GM12878 (cell line): ENCODE measurements at regions of chr18 and their contacts with region 1.

Region 1: DNA sequence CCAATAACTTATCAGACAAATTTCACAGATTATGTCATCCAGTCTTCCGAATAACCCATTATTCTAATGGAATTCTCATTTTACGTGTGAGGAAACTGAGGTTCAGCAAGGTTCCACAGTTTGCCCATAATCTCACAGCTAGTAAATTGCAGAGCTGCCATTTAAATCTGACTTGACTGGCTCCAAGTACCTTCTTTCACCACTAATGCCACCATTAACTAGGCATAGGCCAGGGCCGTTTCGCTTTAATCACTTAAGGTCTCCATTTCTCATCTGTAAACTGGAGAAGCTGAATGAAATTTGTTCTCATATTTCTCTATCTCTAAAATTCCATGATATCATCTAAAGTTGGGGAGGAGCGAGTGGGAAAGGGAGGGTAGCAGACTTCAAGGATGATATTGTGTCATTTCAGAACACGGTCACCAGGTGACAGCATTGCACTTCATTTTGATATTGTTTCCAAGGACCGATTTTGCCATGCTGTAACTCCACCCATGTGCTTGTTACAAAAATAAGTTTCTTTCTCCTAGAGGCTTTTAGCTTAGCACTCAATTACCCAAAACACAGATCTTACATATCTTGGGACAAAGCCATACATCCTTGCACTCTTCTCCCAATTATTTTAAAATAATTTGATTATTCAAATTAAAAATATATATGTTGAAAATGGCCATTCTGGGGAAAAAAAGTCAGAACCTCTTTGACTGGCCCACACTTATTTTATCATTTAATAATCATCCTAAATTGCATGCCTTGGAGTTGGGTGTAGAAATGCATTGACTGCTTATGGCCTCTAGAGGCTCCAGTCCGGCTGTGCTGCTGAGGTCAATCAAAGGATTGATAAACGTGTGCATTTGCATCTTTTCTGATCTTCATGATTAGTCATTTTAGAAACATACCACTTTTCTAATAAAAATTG is 123.8 kb downstream of the AKAIN1 start:
- DNase-seq: no peak
- ATAC-seq: peak; percentile 88
- H3K4me3 ChIP-seq: no peak overlapping the region
- H3K27ac ChIP-seq: no peak overlapping the region
- H3K4me1 ChIP-seq: no peaks in the 10 kb centered on the region
- H3K27me3 ChIP-seq: no peaks in the 10 kb centered on the region
- CTCF ChIP-seq: peak; percentile 52 to 90 (median 65)
- EP300 ChIP-seq: no peak
- POLR2A ChIP-seq: no peak
- RAD21 ChIP-seq: peak; percentile 81

Region 2: DNA sequence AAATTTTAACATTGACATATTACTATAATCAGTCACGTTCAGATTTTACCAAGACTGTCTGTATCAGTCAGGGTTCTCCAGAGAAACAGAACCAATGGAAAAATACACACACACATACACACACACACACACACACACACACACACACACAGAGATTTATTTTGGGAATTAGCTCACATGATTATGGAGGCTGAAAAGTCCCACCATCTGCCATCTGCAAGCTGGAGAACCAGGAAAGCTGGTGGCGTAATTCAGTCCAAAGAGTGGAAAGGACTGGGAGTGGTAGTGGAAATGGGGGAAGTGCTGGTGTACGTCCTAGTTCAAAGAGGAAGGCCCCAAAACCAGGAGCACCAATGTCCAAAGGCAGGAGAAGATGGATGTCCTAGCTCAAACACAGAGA is 42.6 kb before region 1 on chr18:
- CTCF ChIA-PET with region 1: no interaction called
- POLR2A ChIA-PET with region 1: no interaction called
- RAD21 ChIA-PET with region 1: no interaction called
- SMC1A ChIA-PET with region 1: no interaction called
- in situ Hi-C with region 1: no loop called
- intact Hi-C with region 1: no loop called
- DNase-seq: no peak
- ATAC-seq: no peak
- H3K4me3 ChIP-seq: no peak overlapping the region
- H3K27ac ChIP-seq: no peak overlapping the region
- H3K4me1 ChIP-seq: no peaks in the 10 kb centered on the region
- H3K27me3 ChIP-seq: no peaks in the 10 kb centered on the region
- CTCF ChIP-seq: no peak
- EP300 ChIP-seq: no peak
- POLR2A ChIP-seq: no peak
- RAD21 ChIP-seq: no peak

Region 3: DNA sequence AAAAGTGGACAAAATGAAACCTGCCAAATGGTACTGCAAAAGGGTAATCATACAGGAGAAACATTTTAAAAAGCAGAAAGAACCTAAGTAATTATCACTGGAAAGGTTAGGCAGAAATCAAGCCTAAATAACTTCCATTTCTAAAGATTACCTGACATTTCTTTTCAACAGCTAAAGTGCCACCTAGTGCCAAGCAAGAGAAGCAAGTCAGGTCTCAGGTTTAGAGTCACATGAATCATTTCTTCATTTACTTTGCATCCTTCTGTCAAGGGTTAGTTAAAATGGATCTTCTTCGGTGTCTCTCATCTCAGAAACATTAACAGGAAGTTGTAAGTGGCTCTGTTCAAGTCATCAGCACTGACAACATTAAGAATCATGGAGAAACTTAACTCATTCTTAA is 33.4 kb after region 1 on chr18:
- CTCF ChIA-PET with region 1: interaction called, 7 read pairs
- POLR2A ChIA-PET with region 1: interaction called, 3 read pairs
- RAD21 ChIA-PET with region 1: interaction called, 3 read pairs
- SMC1A ChIA-PET with region 1: interaction called, 4 read pairs
- in situ Hi-C with region 1: no loop called
- intact Hi-C with region 1: loop called (anchors 2 kb)
- DNase-seq: no peak
- ATAC-seq: peak; percentile 63
- H3K4me3 ChIP-seq: no peak overlapping the region
- H3K27ac ChIP-seq: no peak overlapping the region
- H3K4me1 ChIP-seq: no peaks in the 10 kb centered on the region
- H3K27me3 ChIP-seq: no peaks in the 10 kb centered on the region
- CTCF ChIP-seq: peak in 2 of 3 experiments; percentile 45 to 50; a peak in 4 of 6 replicates
- EP300 ChIP-seq: no peak
- POLR2A ChIP-seq: no peak
- RAD21 ChIP-seq: 0 out of 2 replicates have a peak, but pooled peaks have one; percentile 19

Region 4: GRCh38 chr18:5237723-5238370 is 164.6 kb after region 1 on chr18:
- CTCF ChIA-PET with region 1: no interaction called
- POLR2A ChIA-PET with region 1: no interaction called
- RAD21 ChIA-PET with region 1: no interaction called
- SMC1A ChIA-PET with region 1: interaction called, 4 read pairs
- in situ Hi-C with region 1: no loop called
- intact Hi-C with region 1: loop called (anchors 10 kb)
- DNase-seq: peak; percentile 51
- ATAC-seq: peak; percentile 97
- H3K4me3 ChIP-seq: peak overlapping the region; percentile 95
- H3K27ac ChIP-seq: peak overlapping the region; percentile 98
- H3K4me1 ChIP-seq: peaks cover 5% of the 10 kb centered on the region
- H3K27me3 ChIP-seq: no peaks in the 10 kb centered on the region
- CTCF ChIP-seq: peak; percentile 10 to 31 (median 12); a peak in 1 of 6 replicates
- EP300 ChIP-seq: no peak
- POLR2A ChIP-seq: peak; percentile 97
- RAD21 ChIP-seq: no peak

Region 5: DNA sequence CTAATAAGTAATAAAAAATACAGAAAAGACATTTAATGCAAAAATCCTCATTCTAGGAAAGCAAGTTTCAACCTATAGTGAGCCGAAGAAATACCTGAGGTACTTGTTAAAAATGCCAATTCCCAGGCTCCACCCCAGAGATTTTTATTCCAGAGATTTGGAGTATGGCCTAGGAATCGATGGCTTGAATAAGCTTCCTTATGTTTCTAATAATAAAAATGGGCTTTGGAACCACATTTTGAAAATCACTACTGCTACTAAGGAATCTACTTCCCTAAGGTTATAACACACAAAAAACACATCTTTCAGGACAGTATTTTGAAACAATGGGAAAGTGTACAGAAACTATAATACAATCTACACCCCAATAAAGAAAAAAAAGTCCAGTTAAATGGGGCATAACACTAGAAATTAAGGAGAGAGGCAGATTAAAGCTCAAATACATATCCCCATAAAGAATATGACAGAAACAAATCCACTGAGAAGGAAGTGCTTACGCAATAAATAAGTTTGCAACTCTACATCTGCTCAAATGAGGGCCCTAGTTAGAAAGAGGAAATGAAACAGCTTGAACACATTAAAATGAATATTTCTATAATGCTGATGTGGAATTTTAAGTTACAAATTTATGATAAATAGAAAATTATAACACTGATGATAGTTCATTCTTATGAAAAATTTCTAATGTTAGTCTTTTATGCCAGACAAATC is 366.9 kb after region 1 on chr18:
- CTCF ChIA-PET with region 1: no interaction called
- POLR2A ChIA-PET with region 1: no interaction called
- RAD21 ChIA-PET with region 1: no interaction called
- SMC1A ChIA-PET with region 1: interaction called, 3 read pairs
- in situ Hi-C with region 1: no loop called
- intact Hi-C with region 1: loop called (anchors 10 kb)
- DNase-seq: no peak
- ATAC-seq: no peak
- H3K4me3 ChIP-seq: no peak overlapping the region
- H3K27ac ChIP-seq: no peak overlapping the region
- H3K4me1 ChIP-seq: no peaks in the 10 kb centered on the region
- H3K27me3 ChIP-seq: no peaks in the 10 kb centered on the region; a peak in 1 of 4 replicates
- CTCF ChIP-seq: no peak
- EP300 ChIP-seq: no peak
- POLR2A ChIP-seq: no peak
- RAD21 ChIP-seq: no peak

Region 6: GRCh38 chr18:5543773-5544389 is 470.6 kb after region 1 on chr18 and contains the start of gene EPB41L3:
- CTCF ChIA-PET with region 1: interaction called, 3 read pairs
- POLR2A ChIA-PET with region 1: no interaction called
- RAD21 ChIA-PET with region 1: no interaction called
- SMC1A ChIA-PET with region 1: no interaction called
- in situ Hi-C with region 1: no loop called
- intact Hi-C with region 1: loop called (anchors 5 kb)
- DNase-seq: no peak
- ATAC-seq: no peak
- H3K4me3 ChIP-seq: no peak within 1 kb of the TSS
- H3K27ac ChIP-seq: no peak within 1 kb of the TSS
- H3K4me1 ChIP-seq: no peaks in the 10 kb centered on the region
- H3K27me3 ChIP-seq: peaks cover 0 to 5% of the 10 kb centered on the region in 2 experiments; a peak in 2 of 4 replicates
- CTCF ChIP-seq: no peak
- EP300 ChIP-seq: no peak
- POLR2A ChIP-seq: no peak
- RAD21 ChIP-seq: no peak
- polyA plus RNA-seq, gene EPB41L3: not detected

Region 7: GRCh38 chr18:5841518-5841917 is 768.2 kb after region 1 on chr18:
- CTCF ChIA-PET with region 1: no interaction called
- POLR2A ChIA-PET with region 1: no interaction called
- RAD21 ChIA-PET with region 1: no interaction called
- SMC1A ChIA-PET with region 1: no interaction called
- in situ Hi-C with region 1: no loop called
- intact Hi-C with region 1: loop called (anchors 10 kb)
- DNase-seq: no peak
- ATAC-seq: no peak
- H3K4me3 ChIP-seq: no peak overlapping the region
- H3K27ac ChIP-seq: no peak overlapping the region
- H3K4me1 ChIP-seq: no peaks in the 10 kb centered on the region
- H3K27me3 ChIP-seq: peaks cover 0 to 1% of the 10 kb centered on the region in 2 experiments; a peak in 1 of 4 replicates
- CTCF ChIP-seq: no peak
- EP300 ChIP-seq: no peak
- POLR2A ChIP-seq: no peak
- RAD21 ChIP-seq: no peak